ENCODE measurements at regions of chr3 and their contacts with region 1.

Region 1: DNA sequence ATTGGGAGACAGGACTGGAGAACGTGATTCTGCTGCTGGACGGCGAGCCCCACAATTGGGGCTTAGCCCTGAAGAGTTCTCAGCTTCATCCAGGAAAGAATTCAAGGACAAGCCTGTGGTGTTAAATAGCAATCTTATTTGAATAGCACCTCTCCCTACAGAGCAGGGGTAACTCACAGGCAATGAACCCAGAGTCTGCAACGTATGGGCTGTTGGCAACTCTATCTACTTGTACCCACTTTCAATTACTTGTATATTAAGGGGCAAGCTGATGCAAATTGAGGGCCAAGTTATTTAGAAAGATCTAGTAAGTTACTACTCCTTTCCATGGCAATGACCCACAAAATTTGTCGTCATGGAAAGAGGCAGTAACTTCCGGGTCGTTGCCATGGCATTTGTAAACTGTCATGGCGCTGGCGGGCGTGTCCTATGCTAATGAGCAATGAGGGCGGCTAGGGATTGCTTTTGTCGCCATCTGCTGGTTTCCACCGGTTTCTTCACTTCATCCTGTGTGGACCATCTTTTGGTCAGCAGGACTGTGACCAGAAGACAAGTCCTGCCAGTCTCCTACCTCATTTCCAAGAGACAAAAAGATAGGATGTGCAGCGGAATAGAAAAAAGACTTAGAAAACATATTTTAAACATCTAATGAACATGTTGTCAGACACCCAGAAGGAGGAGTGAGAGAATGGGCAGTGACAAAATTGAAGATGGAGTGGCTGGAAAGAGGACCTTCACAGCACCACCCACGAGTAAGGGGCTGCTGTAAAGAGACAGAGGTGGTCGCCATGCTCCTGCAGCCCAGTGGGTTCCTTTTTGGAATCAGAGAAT is 45.8 kb upstream of the SH3BP5 start:
- DNase-seq: peak; percentile 92 to 93
- H3K4me3 ChIP-seq: no peak overlapping the region
- H3K4me3 Mint-ChIP-seq: peak overlapping the region; percentile 19
- H3K27ac Mint-ChIP-seq: peak overlapping the region; percentile 57
- H3K4me1 ChIP-seq: 0 out of 2 replicates have a peak, but pooled peaks cover 5% of the 10 kb centered on the region
- H3K4me1 Mint-ChIP-seq: peaks cover 6% of the 10 kb centered on the region
- H3K27me3 ChIP-seq: no peaks in the 10 kb centered on the region
- H3K27me3 Mint-ChIP-seq: no peaks in the 10 kb centered on the region
- CTCF ChIP-seq: peak; percentile 76 to 81

Region 2: GRCh38 chr3:15332405-15333098 is 45.6 kb before region 1 on chr3 and contains the start of gene SH3BP5:
- CTCF ChIA-PET with region 1: interaction called, 3 read pairs
- POLR2A ChIA-PET with region 1: no interaction called
- intact Hi-C with region 1: loop called (anchors 1 kb)
- DNase-seq: peak; percentile 64 to 83
- H3K4me3 ChIP-seq: peak within 1 kb of the TSS; percentile 93
- H3K4me3 Mint-ChIP-seq: peak within 1 kb of the TSS; percentile 91
- H3K27ac Mint-ChIP-seq: peak within 1 kb of the TSS; percentile 82
- H3K4me1 ChIP-seq: peaks cover 16% of the 10 kb centered on the region
- H3K4me1 Mint-ChIP-seq: peaks cover 3% of the 10 kb centered on the region
- H3K27me3 ChIP-seq: no peaks in the 10 kb centered on the region
- H3K27me3 Mint-ChIP-seq: no peaks in the 10 kb centered on the region
- CTCF ChIP-seq: peak; percentile 49 to 62
- total RNA-seq, gene SH3BP5: 20.8 and 26.1 TPM in 2 replicates